ENCODE measurements at regions of chr10 and their contacts with region 1.

Region 1: GRCh38 chr10:69408318-69409175 is 8.2 kb downstream of the TACR2 start:
- DNase-seq: peak; percentile 83
- ATAC-seq: peak; percentile 82
- H3K4me3 Mint-ChIP-seq: peak overlapping the region; percentile 69
- H3K27ac Mint-ChIP-seq: peak overlapping the region; percentile 83
- H3K4me1 Mint-ChIP-seq: peaks cover 28% of the 10 kb centered on the region
- H3K27me3 Mint-ChIP-seq: no peaks in the 10 kb centered on the region
- CTCF ChIP-seq: no peak

Region 2: DNA sequence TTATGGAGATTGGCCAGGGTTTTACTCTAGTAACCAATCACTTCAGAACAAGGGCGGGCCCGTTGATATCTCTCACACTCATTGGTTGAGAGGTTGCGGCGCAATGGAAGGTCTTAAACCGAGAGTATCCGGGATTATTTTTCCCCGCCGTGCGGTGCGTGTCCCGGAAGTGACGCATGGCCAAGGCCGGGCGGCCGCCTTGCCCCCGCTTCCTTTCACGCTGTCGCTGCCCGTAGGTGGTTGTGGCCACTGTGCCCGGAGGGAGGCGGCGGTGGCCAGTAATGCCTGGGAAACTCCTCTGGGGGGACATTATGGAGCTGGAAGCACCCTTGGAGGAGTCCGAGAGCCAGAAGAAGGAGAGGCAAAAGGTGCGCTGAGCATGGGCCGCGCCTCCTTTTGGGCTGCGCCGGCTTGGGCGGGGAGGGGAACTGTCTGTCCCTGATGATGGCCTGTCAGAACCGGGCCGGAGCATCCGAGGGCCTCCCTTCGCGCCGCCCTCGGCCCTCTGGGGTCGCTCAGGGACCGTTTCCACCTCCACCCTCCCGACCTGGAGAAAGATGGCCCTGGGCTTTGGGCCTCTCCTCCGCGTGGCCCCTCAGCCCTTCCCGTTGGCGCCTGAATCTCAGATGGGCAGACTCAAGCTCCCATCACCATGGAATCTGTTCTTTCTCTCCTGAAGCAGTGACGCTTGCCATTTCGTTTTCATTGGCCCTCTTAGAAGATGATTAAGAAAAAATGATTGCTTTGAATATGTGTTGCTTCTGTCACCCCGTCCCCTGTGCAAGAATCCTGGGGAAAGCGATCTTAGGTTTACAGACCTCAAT is 507.2 kb before region 1 on chr10 and contains the start of gene DDX50:
- CTCF ChIA-PET with region 1: no interaction called
- POLR2A ChIA-PET with region 1: interaction called, 3 read pairs
- intact Hi-C with region 1: loop called (anchors 1 kb)
- DNase-seq: peak; percentile 92
- ATAC-seq: peak; percentile 96
- H3K4me3 Mint-ChIP-seq: peak within 1 kb of the TSS; percentile 98
- H3K27ac Mint-ChIP-seq: peak within 1 kb of the TSS; percentile 98
- H3K4me1 Mint-ChIP-seq: peaks cover 40% of the 10 kb centered on the region
- H3K27me3 Mint-ChIP-seq: no peaks in the 10 kb centered on the region
- CTCF ChIP-seq: no peak
- total RNA-seq, gene DDX50: 36.3 and 41.7 TPM in 2 replicates

Region 3: GRCh38 chr10:69123747-69124562 is 284.6 kb before region 1 on chr10 and contains the start of gene VPS26A:
- CTCF ChIA-PET with region 1: no interaction called
- POLR2A ChIA-PET with region 1: no interaction called
- intact Hi-C with region 1: loop called (anchors 1 kb)
- DNase-seq: peak; percentile 100
- ATAC-seq: peak; percentile 94
- H3K4me3 Mint-ChIP-seq: peak within 1 kb of the TSS; percentile 93
- H3K27ac Mint-ChIP-seq: peak within 1 kb of the TSS; percentile 98
- H3K4me1 Mint-ChIP-seq: peaks cover 25% of the 10 kb centered on the region
- H3K27me3 Mint-ChIP-seq: no peaks in the 10 kb centered on the region
- CTCF ChIP-seq: no peak
- total RNA-seq, gene VPS26A: 25.9 and 29.5 TPM in 2 replicates

Region 4: GRCh38 chr10:69237528-69238159 is 170.9 kb before region 1 on chr10:
- CTCF ChIA-PET with region 1: interaction called, 7 read pairs
- POLR2A ChIA-PET with region 1: interaction called, 6 read pairs
- intact Hi-C with region 1: loop called (anchors 1 kb)
- DNase-seq: peak; percentile 79
- ATAC-seq: peak; percentile 98
- H3K4me3 Mint-ChIP-seq: no peak overlapping the region
- H3K27ac Mint-ChIP-seq: no peak overlapping the region
- H3K4me1 Mint-ChIP-seq: peaks cover 3% of the 10 kb centered on the region
- H3K27me3 Mint-ChIP-seq: no peaks in the 10 kb centered on the region
- CTCF ChIP-seq: peak; percentile 67

Region 5: DNA sequence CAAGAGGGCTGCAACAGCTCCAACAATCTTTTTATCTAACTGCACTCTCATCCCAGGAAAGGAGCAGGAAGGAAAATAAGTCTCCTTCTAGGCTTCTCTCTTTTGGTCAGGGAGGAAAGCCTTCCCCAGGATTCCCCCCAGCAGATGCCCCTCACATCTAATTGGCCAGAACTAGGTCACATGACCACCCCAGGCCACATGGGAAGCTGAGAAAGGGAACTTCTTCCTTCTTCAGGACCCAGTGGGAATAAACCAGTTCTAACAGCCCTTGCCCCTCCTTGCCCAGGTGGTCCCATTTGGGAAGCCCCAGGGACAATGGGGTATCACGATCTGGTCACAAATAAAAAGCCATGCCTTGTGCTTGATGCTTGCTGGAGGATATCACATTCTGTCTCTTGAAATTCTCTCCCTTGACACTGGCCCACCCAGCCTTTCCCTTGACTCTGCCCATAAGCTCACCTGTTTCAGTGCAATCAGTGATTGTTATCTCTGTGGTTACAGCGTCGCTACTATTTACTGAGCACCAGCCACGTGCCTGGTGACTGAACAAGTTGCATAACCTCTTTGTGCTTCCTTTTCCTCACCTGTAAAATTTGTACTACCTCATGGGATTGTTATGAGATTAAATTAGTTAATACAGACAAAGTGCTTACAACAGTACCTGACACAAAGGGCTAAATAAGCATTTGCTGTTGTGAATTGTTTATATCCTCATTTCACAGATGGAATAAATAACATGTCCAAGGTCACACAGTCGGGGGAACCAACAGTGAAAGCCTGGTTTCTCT is 17.2 kb after region 1 on chr10:
- CTCF ChIA-PET with region 1: no interaction called
- POLR2A ChIA-PET with region 1: no interaction called
- intact Hi-C with region 1: loop called (anchors 2 kb)
- DNase-seq: no peak
- ATAC-seq: no peak
- H3K4me3 Mint-ChIP-seq: no peak overlapping the region
- H3K27ac Mint-ChIP-seq: no peak overlapping the region
- H3K4me1 Mint-ChIP-seq: peaks cover 5% of the 10 kb centered on the region
- H3K27me3 Mint-ChIP-seq: peaks cover 5% of the 10 kb centered on the region
- CTCF ChIP-seq: no peak

Region 6: DNA sequence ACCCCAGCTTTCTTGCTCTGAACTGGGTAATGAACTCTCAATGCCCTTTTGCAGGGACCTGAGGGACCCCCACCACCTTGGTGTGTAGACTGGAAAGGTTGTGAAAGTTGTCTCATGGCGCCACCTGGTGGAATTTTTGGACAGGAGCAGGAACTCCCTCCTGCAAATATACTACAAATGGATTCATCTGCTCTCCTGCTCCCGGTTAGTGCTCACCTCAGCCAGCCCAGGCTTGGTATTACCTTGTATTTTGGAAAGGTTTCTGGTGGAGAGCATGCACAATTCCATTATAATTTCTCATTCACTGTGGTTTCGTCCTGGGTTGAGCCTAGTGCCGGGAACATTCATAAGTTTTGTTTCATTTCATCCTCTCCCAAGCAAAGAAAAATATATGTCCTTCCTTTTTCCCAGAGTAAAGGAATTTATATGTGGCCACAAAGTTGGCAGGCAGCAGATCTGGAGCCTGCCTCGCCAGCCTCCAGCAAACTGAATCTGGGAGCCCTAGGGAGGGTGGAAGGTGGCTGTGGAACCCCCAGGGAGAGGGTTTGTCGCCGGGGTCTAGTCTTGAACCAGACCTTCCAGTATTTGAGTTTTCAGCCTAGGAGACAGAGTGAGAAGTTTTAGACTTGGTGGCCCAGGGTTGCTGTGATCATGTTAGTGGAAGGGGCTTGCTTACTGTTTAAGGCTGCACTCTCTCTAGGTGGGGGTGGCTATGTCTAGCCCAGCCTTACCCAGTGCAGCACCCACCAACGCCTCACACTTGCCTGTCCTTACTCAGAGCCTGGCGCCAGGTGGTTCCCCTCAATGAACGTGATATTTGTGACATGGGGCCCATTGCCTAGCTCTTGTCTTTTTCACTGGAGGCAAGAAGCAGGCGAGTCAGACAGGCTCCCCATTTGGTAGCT is 231.0 kb after region 1 on chr10:
- CTCF ChIA-PET with region 1: interaction called, 3 read pairs
- POLR2A ChIA-PET with region 1: no interaction called
- intact Hi-C with region 1: loop called (anchors 1 kb)
- DNase-seq: no peak
- ATAC-seq: peak; percentile 50
- H3K4me3 Mint-ChIP-seq: no peak overlapping the region
- H3K27ac Mint-ChIP-seq: no peak overlapping the region
- H3K4me1 Mint-ChIP-seq: no peaks in the 10 kb centered on the region
- H3K27me3 Mint-ChIP-seq: peaks cover 9% of the 10 kb centered on the region
- CTCF ChIP-seq: no peak

Measured in activated B cell treated with CpG ODN at 0.5 μM for 24 hours (primary cell).